GM12878 (cell line): ENCODE measurements at regions of chr6 and their contacts with region 1.

Region 1: DNA sequence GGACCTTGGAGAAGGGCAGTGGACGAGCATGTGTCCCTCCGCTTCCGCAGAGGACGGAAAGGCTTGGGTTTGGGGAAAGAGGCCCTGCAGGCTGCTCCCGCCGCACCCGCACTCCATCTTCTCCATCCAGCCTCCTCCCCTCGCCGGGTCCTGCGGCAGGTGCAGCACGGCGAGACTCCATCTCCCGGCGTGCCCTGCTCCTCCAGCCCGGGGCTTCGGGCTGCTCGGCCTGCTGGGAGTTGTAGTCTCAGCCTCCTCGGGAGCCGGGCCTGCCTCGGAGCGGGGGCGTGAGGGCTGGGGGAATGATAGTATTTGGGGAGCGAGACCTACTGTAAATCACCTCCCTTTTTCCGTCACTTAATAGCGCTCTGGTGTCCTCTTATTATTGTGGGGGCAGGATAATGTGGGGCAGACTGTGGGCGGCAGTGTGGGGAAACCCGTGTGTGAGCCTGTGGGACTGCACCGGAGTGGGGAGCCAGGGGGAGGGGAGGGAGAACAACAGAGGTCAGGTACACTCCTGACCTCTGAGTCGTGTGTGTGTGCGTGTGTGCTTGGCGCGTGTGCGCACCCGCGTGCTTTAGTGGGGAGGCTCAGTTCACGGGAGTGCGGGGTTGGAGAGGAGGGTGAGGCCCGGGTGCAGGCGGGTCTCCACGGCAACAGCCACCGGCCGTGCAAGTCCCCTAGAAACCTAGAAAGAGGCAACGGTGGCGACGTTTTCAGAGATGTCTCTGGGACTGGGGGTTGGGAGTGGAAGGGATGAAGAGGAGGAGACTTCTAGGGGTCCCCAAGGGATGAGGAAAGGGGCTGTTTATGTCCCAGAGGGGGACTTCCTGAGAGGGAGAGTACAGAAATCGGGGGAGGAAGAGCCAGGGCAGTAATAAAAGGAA is 4.1 kb downstream of the TTBK1 start:
- DNase-seq: no peak
- ATAC-seq: peak; percentile 97
- H3K4me3 ChIP-seq: peak overlapping the region; percentile 73
- H3K27ac ChIP-seq: peak overlapping the region; percentile 46
- H3K4me1 ChIP-seq: peaks cover 27% of the 10 kb centered on the region
- H3K27me3 ChIP-seq: peaks cover 8 to 12% of the 10 kb centered on the region in 2 experiments
- CTCF ChIP-seq: no peak
- EP300 ChIP-seq: no peak
- POLR2A ChIP-seq: peak; percentile 60
- RAD21 ChIP-seq: no peak

Region 2: DNA sequence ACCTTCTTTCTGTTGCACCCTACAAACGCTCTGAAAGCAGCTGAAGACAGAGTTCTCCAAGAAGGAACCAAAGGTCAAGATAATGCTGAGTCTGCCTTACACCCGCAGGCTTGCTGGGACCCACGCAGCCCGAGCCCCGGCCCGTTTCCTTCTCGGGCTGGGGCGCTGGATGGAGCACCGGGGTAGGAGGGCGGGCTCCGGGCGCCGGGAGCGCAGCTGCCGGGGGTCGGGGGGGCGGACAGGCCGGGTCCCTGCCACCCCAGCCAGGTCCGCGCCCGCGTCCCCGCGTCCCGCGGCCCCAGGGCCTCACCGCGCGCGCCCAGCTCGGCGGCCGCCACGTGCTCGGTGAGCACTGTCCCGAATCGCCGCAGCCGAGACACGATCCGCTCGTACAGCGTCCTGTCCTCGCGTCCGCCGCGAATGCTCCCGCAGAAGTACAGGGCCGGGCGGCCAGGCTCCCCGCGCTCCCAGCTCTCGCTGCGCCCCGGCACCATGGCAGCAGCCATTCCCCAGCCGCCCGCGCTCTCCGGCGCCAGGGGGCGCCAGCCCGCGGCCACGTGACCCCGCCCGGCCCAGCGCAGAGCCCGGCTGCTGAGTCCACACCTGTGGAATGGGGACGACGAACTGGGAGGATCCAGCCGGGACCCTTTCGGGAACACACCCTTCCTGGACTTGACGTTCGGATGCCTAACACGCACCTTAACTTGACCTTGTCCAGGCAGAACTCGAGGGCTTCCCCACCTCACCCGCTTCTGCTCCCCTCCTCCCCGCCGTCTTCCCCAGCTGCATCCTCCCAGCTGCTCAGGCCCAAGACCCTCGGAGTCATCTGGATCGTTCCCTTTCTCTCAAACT is 18.2 kb before region 1 on chr6 and contains the start of gene DNPH1:
- CTCF ChIA-PET with region 1: interaction called, 19 read pairs
- POLR2A ChIA-PET with region 1: interaction called, 9 read pairs
- RAD21 ChIA-PET with region 1: interaction called, 10 read pairs
- SMC1A ChIA-PET with region 1: interaction called, 11 read pairs
- in situ Hi-C with region 1: no loop called
- intact Hi-C with region 1: no loop called
- DNase-seq: no peak
- ATAC-seq: peak; percentile 87
- H3K4me3 ChIP-seq: peak within 1 kb of the TSS; percentile 76
- H3K27ac ChIP-seq: peak within 1 kb of the TSS; percentile 60
- H3K4me1 ChIP-seq: peaks cover 22% of the 10 kb centered on the region
- H3K27me3 ChIP-seq: no peaks in the 10 kb centered on the region; a peak in 1 of 4 replicates
- CTCF ChIP-seq: peak; percentile 71 to 95 (median 91); a peak in 5 of 6 replicates
- EP300 ChIP-seq: no peak
- POLR2A ChIP-seq: peak; percentile 92
- RAD21 ChIP-seq: peak; percentile 56
- polyA plus RNA-seq, gene DNPH1: 7.0 to 16.5 TPM